Heart left ventricle (tissue), 16 donors: ENCODE measurements at regions of chr6 and their contacts with region 1.

Region 1: GRCh38 chr6:116279260-116280063 is at the start of gene TSPYL1:
- DNase-seq: peak; percentile 97 to 98 (median 97)
- ATAC-seq: peak; percentile 97 to 98 (median 98)
- H3K4me3 ChIP-seq: peak within 1 kb of the TSS; percentile 73 to 97 (median 88)
- H3K27ac ChIP-seq: peak within 1 kb of the TSS; percentile 89 to 99 (median 97)
- H3K4me1 ChIP-seq: peaks cover 8 to 70% (median 55%) of the 10 kb centered on the region in 12 donors
- H3K27me3 ChIP-seq: no peaks in the 10 kb centered on the region
- CTCF ChIP-seq: peak in 1 of 12 donors; percentile 14
- POLR2A ChIP-seq: peak; percentile 91 to 99
- total RNA-seq, gene TSPYL1: 81.5 to 150 (median 103) TPM

Region 2: DNA sequence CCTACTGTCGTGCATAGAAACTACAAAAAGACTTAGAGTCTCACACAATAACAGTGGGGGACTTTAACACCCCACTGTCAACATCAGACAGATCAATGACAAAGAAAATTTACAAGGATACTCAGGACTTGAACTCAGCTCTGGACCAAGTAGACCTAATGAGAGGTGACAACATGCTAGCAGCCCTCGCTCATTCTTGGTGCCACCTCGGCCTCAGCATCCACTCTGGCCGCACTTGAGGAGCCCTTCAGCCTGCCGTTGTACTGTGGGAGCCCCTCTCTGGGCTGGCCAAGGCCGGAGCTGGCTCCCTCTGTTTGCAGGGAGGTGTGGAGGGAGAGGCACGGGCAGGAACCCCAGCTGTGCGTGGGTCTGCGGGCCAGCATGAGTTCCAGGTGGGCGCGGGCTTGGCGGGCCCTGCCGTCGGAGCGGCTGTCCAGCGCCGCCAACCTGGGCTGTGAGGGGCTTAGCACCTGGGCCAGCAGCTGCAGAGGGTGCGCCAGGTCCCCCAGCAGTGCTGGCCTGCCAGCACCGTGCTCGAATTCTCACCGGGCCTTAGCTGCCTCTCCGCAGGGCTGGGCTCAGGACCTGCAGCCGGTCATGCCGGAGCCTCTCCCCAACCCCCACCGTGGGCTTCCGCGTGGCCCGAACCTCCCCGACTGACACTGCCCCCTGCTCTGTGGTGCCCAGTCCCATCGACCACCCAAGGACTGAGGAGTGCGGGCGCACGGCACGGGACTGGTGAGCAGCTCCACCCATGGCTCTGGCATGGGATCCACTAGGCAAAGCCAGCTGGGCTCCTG is 424.4 kb before region 1 on chr6:
- intact Hi-C with region 1: no loop called
- DNase-seq: no peak
- ATAC-seq: peak in 1 of 4 donors; percentile 15
- H3K4me3 ChIP-seq: no peak overlapping the region
- H3K27ac ChIP-seq: no peak overlapping the region
- H3K4me1 ChIP-seq: no peaks in the 10 kb centered on the region
- H3K27me3 ChIP-seq: no peaks in the 10 kb centered on the region
- CTCF ChIP-seq: no peak
- POLR2A ChIP-seq: no peak

Region 3: GRCh38 chr6:116190550-116190949 is 88.9 kb before region 1 on chr6:
- intact Hi-C with region 1: no loop called
- DNase-seq: no peak
- ATAC-seq: peak in 3 of 4 donors; percentile 22 to 38 (median 25)
- H3K4me3 ChIP-seq: no peak overlapping the region
- H3K27ac ChIP-seq: peak overlapping the region in 3 of 12 donors; percentile 11 to 29 (median 11)
- H3K4me1 ChIP-seq: peaks cover 0 to 45% (median 15%) of the 10 kb centered on the region in 12 donors
- H3K27me3 ChIP-seq: no peaks in the 10 kb centered on the region
- CTCF ChIP-seq: no peak
- POLR2A ChIP-seq: no peak

Region 4: GRCh38 chr6:116244284-116244683 is 35.2 kb before region 1 on chr6:
- intact Hi-C with region 1: no loop called
- DNase-seq: no peak
- ATAC-seq: no peak
- H3K4me3 ChIP-seq: no peak overlapping the region
- H3K27ac ChIP-seq: no peak overlapping the region
- H3K4me1 ChIP-seq: peaks cover 0 to 27% (median 7%) of the 10 kb centered on the region in 12 donors
- H3K27me3 ChIP-seq: no peaks in the 10 kb centered on the region
- CTCF ChIP-seq: no peak
- POLR2A ChIP-seq: no peak

Region 5: DNA sequence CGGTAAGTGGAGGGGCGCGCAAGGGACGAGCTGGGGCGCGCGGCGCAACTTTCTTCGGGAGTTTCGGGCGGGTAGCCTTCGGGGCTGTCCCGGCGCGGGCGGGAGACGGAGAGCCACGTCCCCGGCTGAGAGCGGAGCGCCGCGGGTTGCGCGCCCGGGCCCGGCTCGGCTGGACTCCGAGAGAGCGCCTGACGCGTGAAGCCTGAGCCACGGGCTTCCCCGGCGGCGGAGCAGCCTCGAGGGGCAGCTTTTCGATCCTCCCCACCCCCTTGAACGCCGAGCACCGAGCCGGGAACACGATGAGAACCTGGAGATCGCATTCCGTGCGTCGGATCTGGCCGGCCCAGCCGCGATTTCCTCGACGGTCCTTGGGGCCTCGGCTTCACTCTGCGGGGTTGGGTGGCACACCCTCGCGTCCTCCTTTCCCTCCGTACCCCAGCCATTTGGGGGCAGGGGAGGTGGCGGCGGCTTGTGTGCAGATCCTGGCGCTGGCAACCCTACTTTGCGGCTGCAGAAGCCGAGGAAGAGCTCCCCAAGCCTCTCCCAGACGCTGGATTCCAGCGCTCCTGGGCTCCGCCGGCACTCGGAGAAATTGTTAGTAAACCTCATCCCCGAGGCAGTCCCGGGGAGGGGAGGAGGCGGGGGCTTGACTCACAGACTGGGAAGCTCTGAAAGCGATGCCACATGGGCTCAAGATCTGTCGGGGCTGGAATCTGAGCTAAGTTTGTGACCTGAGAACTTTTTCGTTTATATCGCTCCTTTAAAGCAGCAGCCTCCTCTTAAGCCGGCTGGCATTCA is 91.9 kb after region 1 on chr6:
- intact Hi-C with region 1: loop called in 2 of 10 experiments (anchors 5 to 10 kb)
- DNase-seq: peak; percentile 68 to 85 (median 81)
- ATAC-seq: peak; percentile 33 to 82 (median 78)
- H3K4me3 ChIP-seq: peak overlapping the region; percentile 46 to 89 (median 78)
- H3K27ac ChIP-seq: peak overlapping the region; percentile 81 to 96 (median 84)
- H3K4me1 ChIP-seq: peaks cover 0 to 57% (median 6%) of the 10 kb centered on the region in 12 donors
- H3K27me3 ChIP-seq: no peaks in the 10 kb centered on the region
- CTCF ChIP-seq: no peak
- POLR2A ChIP-seq: no peak

Region 6: GRCh38 chr6:116444092-116444491 is 164.6 kb after region 1 on chr6:
- intact Hi-C with region 1: loop called in 2 of 10 experiments (anchors 10 kb)
- DNase-seq: no peak
- ATAC-seq: peak in 3 of 4 donors; percentile 53 to 61 (median 59)
- H3K4me3 ChIP-seq: no peak overlapping the region
- H3K27ac ChIP-seq: no peak overlapping the region
- H3K4me1 ChIP-seq: peaks cover 0 to 43% (median 0%) of the 10 kb centered on the region in 12 donors
- H3K27me3 ChIP-seq: no peaks in the 10 kb centered on the region
- CTCF ChIP-seq: peak; percentile 8 to 62 (median 41)
- POLR2A ChIP-seq: no peak

Region 7: GRCh38 chr6:116511404-116512110 is 232.1 kb after region 1 on chr6 and contains the start of gene CALHM5:
- intact Hi-C with region 1: loop called in 1 of 10 experiments (anchors 5 kb)
- DNase-seq: peak; percentile 42 to 69 (median 54)
- ATAC-seq: peak; percentile 81 to 96 (median 94)
- H3K4me3 ChIP-seq: peak within 1 kb of the TSS; percentile 15 to 65 (median 50)
- H3K27ac ChIP-seq: peak within 1 kb of the TSS; percentile 46 to 92 (median 84)
- H3K4me1 ChIP-seq: peaks cover 0 to 32% (median 11%) of the 10 kb centered on the region in 12 donors
- H3K27me3 ChIP-seq: no peaks in the 10 kb centered on the region
- CTCF ChIP-seq: peak; percentile 54 to 82 (median 68)
- POLR2A ChIP-seq: no peak
- total RNA-seq, gene CALHM5: 1.4 to 3.0 (median 1.8) TPM

Region 8: DNA sequence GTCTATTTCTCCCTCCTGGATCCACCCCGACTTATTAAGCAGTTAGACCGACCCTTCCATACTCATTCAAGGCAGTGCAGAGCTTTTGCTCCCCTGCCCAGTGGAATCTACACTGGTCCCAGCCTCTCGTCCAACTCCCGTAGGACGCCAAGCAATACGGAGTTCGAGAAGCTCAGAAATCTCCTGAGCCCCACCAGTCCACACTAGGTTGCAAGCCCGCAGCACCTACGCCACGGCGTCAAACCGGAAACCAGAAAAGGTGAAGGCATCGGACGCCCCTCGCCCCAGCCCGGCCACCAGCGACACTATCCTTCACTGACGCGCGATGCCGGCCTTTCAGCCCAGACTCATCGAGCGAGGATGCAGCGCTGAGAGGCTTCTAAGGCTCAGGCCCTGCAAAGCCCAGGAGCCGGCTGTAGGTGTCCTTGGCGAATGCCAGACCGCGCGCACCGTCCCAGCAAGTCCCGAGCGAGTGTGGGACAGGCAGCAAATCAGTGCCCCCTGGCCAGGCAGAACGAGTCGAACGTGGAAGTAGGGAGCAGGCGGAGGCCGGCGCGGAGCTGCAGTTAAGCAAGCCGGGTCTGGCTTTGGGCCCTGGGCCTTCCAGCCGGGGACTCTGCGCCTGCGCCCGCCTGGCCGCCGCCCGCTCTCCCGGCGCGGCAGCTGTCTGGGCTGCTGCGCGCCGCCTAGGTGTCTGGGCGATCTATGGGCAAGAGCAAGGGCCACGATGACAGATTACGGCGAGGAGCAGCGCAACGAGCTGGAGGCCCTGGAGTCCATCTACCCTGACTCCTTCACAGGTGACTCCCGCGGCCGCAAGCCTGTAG is 291.6 kb after region 1 on chr6 and contains the start of gene RWDD1:
- intact Hi-C with region 1: loop called in 5 of 10 experiments (anchors 5 to 10 kb)
- DNase-seq: peak; percentile 99 to 100 (median 100)
- ATAC-seq: peak; percentile 97 to 99 (median 99)
- H3K4me3 ChIP-seq: peak within 1 kb of the TSS; percentile 65 to 97 (median 80)
- H3K27ac ChIP-seq: peak within 1 kb of the TSS; percentile 73 to 96 (median 90)
- H3K4me1 ChIP-seq: peaks cover 3 to 43% (median 29%) of the 10 kb centered on the region in 12 donors
- H3K27me3 ChIP-seq: no peaks in the 10 kb centered on the region
- CTCF ChIP-seq: peak in 1 of 12 donors; percentile 25
- POLR2A ChIP-seq: peak; percentile 15 to 84
- total RNA-seq, gene RWDD1: 35.9 to 70.5 (median 48.8) TPM

Region 9: DNA sequence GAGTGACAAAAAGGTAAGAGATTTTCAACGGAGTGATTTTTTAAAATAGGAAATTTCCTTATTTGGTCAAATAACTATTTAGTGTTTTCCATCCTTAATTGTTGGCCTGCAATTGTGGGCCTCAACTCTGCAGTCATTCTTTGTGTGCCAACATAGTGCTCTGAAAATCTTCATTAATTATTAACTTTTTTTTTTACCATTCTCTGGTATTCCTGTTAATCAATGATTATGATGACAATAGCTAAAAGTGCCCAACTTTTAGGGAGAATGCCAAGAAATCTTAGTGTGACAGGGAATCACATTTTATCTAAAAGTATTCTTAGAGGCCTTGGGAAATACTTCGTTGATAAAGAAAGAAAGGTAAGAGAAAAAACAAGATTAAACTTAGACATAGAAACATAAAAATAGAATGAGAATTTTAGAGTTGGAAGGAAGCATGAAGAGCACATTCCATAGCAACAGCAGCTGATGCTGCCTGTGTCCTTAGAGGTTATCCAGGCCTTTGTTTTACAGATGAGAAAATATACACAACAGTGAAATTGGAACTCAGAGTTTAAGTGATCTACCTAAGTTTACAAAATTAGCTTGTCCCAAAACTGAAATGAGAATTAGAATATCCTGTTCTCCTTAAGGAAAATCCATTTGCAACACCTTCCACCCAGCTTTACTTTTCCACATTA is 548.2 kb after region 1 on chr6:
- intact Hi-C with region 1: no loop called
- DNase-seq: no peak
- ATAC-seq: no peak
- H3K4me3 ChIP-seq: no peak overlapping the region
- H3K27ac ChIP-seq: no peak overlapping the region
- H3K4me1 ChIP-seq: no peaks in the 10 kb centered on the region
- H3K27me3 ChIP-seq: no peaks in the 10 kb centered on the region
- CTCF ChIP-seq: no peak
- POLR2A ChIP-seq: no peak